HEK293T (cell line): ENCODE measurements at regions of chr11 and their contacts with region 1.

Region 1: GRCh38 chr11:66022401-66023185 is 3.7 kb downstream of the CATSPER1 start:
- DNase-seq: peak; percentile 94

Region 2: GRCh38 chr11:65973439-65974110 is 49.0 kb before region 1 on chr11:
- CTCF ChIA-PET with region 1: no interaction called
- POLR2A ChIA-PET with region 1: no interaction called
- DNase-seq: no peak

Region 3: GRCh38 chr11:66045177-66045639 is 22.6 kb after region 1 on chr11:
- CTCF ChIA-PET with region 1: interaction called, 11 read pairs
- POLR2A ChIA-PET with region 1: interaction called, 3 read pairs
- DNase-seq: peak; percentile 90

Region 4: GRCh38 chr11:66087148-66087908 is 64.7 kb after region 1 on chr11:
- CTCF ChIA-PET with region 1: no interaction called
- POLR2A ChIA-PET with region 1: no interaction called
- DNase-seq: no peak